SK-N-SH (cell line): ENCODE measurements at regions of chr22 and their contacts with region 1.

Region 1: DNA sequence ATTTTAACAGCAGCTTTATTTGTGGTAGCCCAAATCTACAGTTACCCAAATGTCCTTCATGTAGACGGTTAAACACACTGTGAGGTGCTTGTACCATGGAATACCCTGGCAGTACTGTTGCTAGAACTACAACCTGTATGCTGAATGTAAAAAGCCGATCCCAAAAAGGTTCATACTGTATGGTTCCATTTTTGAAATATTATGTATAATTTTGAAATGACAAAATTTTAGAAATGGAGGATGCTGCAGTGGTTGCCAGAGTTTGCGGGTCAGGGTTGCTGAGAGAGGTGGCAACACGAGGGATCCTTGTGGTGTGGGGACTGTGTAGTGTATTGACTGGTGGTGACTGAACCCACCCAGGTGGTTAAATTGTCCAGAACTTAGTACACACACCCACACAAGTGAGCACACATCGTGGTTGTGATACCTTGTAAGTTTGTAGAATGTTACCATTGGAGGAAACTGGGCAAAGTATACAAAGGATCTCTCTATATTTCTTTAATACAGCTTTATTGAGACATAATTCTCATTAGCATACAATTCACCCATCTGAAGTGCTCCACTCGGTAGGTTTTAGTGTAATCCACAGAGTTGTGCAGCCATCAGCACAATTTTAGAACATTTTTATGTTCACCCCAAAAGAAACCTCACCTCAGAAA is 56.0 kb downstream of the MED15 start:
- DNase-seq: no peak
- H3K4me3 ChIP-seq: no peak overlapping the region
- H3K27ac ChIP-seq: peak overlapping the region in 1 of 2 experiments; percentile 45; a peak in 1 of 4 replicates
- H3K4me1 ChIP-seq: peaks cover 3 to 10% of the 10 kb centered on the region in 2 experiments
- H3K27me3 ChIP-seq: no peaks in the 10 kb centered on the region
- CTCF ChIP-seq: no peak
- EP300 ChIP-seq: no peak
- RAD21 ChIP-seq: no peak

Region 2: GRCh38 chr22:20545681-20546521 is 17.5 kb before region 1 on chr22:
- CTCF ChIA-PET with region 1: interaction called, 103 read pairs
- POLR2A ChIA-PET with region 1: no interaction called
- DNase-seq: no peak
- H3K4me3 ChIP-seq: no peak overlapping the region
- H3K27ac ChIP-seq: no peak overlapping the region; a peak in 1 of 4 replicates
- H3K4me1 ChIP-seq: peaks cover 23 to 26% of the 10 kb centered on the region in 2 experiments; a peak in 3 of 4 replicates
- H3K27me3 ChIP-seq: no peaks in the 10 kb centered on the region
- CTCF ChIP-seq: no peak
- EP300 ChIP-seq: no peak
- RAD21 ChIP-seq: no peak

Region 3: DNA sequence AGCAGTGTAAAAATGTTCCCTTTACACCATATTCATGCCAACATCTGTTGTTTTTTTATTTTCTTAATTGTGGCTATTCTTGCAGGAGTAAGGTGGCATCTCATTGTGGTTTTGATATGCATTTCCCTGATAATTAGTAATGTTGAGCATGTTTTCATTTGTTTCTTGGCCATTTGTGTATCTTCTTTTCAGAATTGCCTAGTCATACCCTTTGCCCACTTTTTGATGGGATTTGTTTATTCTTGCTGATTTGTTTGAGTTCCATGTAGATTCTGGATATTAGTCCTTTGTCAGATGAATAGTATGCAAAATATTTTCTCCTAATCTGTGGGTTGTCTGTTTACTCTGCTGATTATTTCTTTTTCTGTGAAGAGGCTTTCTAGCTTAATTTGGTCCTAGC is 111.6 kb after region 1 on chr22:
- CTCF ChIA-PET with region 1: no interaction called
- POLR2A ChIA-PET with region 1: no interaction called
- DNase-seq: no peak
- H3K4me3 ChIP-seq: no peak overlapping the region
- H3K27ac ChIP-seq: no peak overlapping the region
- H3K4me1 ChIP-seq: no peaks in the 10 kb centered on the region
- H3K27me3 ChIP-seq: no peaks in the 10 kb centered on the region
- CTCF ChIP-seq: no peak
- EP300 ChIP-seq: no peak
- RAD21 ChIP-seq: no peak